ENCODE measurements at regions of chr1 and their contacts with region 1.

Region 1: GRCh38 chr1:64136752-64137411 is 66.5 kb upstream of the UBE2U start:
- DNase-seq: peak; percentile 72 to 88 (median 83)
- H3K4me3 ChIP-seq: no peak overlapping the region
- H3K27ac ChIP-seq: no peak overlapping the region
- H3K4me1 ChIP-seq: peaks cover 3% of the 10 kb centered on the region
- H3K27me3 ChIP-seq: no peaks in the 10 kb centered on the region
- CTCF ChIP-seq: peak; percentile 49 to 90 (median 90)
- EP300 ChIP-seq: no peak
- POLR2A ChIP-seq: no peak

Region 2: GRCh38 chr1:63615768-63616420 is 521.0 kb before region 1 on chr1:
- intact Hi-C with region 1: loop called in 1 of 4 experiments (anchors 10 kb)
- DNase-seq: peak in 4 of 5 donors; percentile 42 to 76 (median 53)
- H3K4me3 ChIP-seq: no peak overlapping the region
- H3K27ac ChIP-seq: no peak overlapping the region
- H3K4me1 ChIP-seq: no peaks in the 10 kb centered on the region
- H3K27me3 ChIP-seq: no peaks in the 10 kb centered on the region
- CTCF ChIP-seq: peak; percentile 52 to 83 (median 82)
- EP300 ChIP-seq: no peak
- POLR2A ChIP-seq: no peak

Region 3: DNA sequence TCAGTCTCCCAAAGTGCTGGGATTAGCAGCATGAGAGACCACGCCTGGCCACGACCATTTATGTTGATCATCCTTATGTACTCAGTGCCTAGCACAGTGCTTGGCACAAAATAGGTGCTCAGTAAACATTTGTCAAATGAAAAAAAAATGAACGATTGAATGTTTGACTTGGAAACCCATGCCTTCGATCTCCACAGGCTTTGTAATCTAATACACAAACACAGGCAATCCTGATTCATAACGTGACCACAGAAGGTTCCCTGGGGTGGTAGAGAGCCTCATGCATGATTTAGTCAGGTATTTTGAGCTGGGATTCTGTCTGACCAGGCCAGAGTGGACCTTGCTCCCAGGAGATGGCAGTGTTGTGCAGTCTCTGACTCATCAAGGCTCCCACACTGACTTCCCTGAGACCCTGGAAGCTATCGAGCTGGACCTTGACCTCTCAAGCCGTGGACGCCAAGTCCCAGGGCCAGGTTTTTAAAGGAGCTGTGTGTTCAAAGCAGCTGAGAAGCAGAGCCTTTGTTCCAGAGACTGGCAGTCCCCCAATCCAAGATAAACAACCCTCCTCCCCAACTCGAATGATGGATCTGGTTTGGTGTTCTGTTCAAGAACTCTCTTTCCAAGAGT is 462.5 kb before region 1 on chr1:
- intact Hi-C with region 1: loop called (anchors 5 to 10 kb)
- DNase-seq: peak; percentile 91 to 95 (median 93)
- H3K4me3 ChIP-seq: no peak overlapping the region
- H3K27ac ChIP-seq: peak overlapping the region in 1 of 2 donors; percentile 62
- H3K4me1 ChIP-seq: peaks cover 7% of the 10 kb centered on the region
- H3K27me3 ChIP-seq: no peaks in the 10 kb centered on the region
- CTCF ChIP-seq: peak; percentile 77 to 83 (median 78)
- EP300 ChIP-seq: no peak
- POLR2A ChIP-seq: no peak

Region 4: GRCh38 chr1:63946866-63947491 is 189.9 kb before region 1 on chr1:
- intact Hi-C with region 1: loop called in 1 of 4 experiments (anchors 10 kb)
- DNase-seq: peak in 1 of 5 donors; percentile 32
- H3K4me3 ChIP-seq: no peak overlapping the region
- H3K27ac ChIP-seq: no peak overlapping the region
- H3K4me1 ChIP-seq: peaks cover 10% of the 10 kb centered on the region
- H3K27me3 ChIP-seq: no peaks in the 10 kb centered on the region
- CTCF ChIP-seq: no peak
- EP300 ChIP-seq: no peak
- POLR2A ChIP-seq: no peak

Region 5: DNA sequence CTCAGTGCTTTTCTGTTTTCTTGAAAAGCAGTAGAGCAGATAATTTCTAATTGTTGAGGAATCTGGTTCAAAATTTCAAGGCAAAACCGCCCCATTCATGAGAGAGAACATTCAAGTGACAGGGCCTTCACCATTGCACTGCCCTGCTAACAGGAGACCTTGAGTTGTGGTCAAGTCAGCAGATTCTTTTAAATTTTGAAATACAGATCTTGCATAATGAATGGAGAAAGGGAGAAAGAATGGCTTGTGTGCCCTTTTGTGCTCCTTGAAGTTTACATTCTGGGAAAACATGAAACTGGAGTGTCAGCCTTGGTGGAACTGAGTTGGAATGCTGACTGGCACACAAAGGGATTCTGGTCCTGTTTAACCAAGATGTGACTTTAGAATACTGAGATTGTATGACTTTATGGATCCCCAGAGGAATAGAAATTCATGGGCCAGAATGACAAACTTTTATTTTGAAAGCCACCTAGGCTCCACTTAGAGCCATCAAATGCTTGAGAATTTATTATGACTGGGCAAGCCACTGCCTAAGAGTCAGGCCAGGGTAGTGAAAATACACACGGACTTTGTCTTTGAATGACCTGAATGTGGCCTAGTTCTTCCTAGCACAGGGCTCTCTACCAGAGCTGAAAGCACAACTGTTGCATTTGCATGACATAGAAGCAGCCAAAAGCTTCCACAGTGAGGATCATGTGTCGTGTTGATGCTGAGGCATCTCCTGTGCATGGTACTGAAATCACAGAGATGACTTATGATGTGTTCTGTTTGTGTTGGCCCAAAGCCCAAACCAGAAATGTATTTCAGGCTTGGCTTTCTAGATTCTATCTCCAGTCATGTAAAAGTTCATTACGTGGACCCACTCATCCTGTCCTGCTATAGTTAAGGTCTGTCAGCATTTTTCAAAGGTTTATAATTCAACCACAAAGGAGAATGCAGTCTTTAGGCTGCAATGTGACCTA is 97.6 kb before region 1 on chr1:
- intact Hi-C with region 1: no loop called
- DNase-seq: peak in 1 of 5 donors; percentile 29
- H3K4me3 ChIP-seq: no peak overlapping the region
- H3K27ac ChIP-seq: no peak overlapping the region
- H3K4me1 ChIP-seq: peaks cover 4% of the 10 kb centered on the region
- H3K27me3 ChIP-seq: no peaks in the 10 kb centered on the region
- CTCF ChIP-seq: no peak
- EP300 ChIP-seq: no peak
- POLR2A ChIP-seq: no peak

Region 6: DNA sequence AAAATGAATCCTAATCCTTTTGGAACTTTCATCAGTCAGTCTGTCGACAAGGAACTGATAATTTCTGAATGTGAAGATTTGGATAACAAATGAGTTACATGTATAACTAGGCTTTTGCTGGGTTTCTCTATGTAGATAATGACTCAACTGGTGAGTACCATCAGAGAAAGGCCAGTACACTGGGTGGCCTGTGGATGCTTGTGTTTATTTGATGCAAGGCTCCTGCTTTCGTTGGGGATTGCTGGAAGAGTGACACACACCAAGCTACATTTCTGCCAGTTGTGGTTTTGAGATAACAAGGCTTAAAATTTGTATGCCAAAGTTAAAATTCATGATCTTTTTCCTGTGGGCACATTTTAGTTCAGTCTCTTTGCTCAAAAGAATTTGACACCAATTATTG is 49.1 kb before region 1 on chr1:
- intact Hi-C with region 1: no loop called
- DNase-seq: no peak
- H3K4me3 ChIP-seq: no peak overlapping the region
- H3K27ac ChIP-seq: no peak overlapping the region
- H3K4me1 ChIP-seq: no peaks in the 10 kb centered on the region
- H3K27me3 ChIP-seq: no peaks in the 10 kb centered on the region
- CTCF ChIP-seq: no peak
- EP300 ChIP-seq: no peak
- POLR2A ChIP-seq: no peak